H1 (cell line): ENCODE measurements at regions of chr12 and their contacts with region 1.

Region 1: DNA sequence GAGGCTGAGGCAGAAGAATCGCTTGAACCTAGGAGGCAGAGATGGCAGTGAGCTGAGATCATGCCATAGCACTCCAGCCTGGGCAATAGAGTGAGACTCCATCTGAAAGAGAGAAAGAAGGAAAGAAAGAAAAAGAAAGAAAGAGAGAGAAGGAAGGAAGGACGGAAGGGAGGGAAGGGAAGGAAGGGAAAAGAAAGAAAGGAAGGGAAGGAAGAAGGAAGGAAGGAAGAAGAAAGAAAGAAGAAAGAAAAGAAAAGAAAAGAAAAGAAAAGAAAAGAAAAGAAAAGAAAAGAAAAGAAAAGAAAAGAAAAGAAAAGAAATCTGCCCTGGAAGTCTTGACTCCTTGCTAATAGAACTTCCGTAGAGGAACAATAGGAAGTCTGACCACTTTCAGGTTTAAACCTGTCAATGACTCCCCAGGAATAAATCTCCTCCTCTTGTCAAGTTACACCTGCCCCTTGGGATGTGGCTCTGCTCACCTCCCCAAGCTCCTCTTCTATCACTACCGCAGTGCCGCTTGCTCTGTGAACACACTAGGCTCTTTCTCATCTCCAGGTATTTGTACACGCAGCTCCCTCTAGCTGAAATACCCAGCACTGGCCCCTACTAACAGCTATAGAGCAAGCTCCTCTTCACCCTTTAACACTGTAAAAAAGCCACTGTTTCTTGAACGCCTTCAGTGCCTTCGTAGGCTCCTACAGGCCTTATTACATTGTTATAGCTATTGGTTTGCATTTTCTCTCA is 773.1 kb upstream of the TBX3 start:
- DNase-seq: no peak
- H3K4me3 ChIP-seq: no peak overlapping the region
- H3K27ac ChIP-seq: no peak overlapping the region
- H3K4me1 ChIP-seq: peaks cover 3 to 9% (median 7%) of the 10 kb centered on the region in 4 experiments
- H3K27me3 ChIP-seq: peaks cover 0 to 5% (median under 1%) of the 10 kb centered on the region in 4 experiments; a peak in 3 of 7 replicates
- CTCF ChIP-seq: peak in 2 of 3 experiments; percentile 54 to 75; a peak in 3 of 4 replicates
- EP300 ChIP-seq: no peak
- POLR2A ChIP-seq: no peak
- RAD21 ChIP-seq: peak; percentile 71 to 80

Region 2: GRCh38 chr12:115468087-115468510 is 11.0 kb after region 1 on chr12:
- CTCF ChIA-PET with region 1: interaction called, 33 read pairs
- POLR2A ChIA-PET with region 1: no interaction called
- DNase-seq: no peak
- H3K4me3 ChIP-seq: no peak overlapping the region
- H3K27ac ChIP-seq: no peak overlapping the region
- H3K4me1 ChIP-seq: peaks cover 0 to 3% (median 0%) of the 10 kb centered on the region in 4 experiments; a peak in 3 of 7 replicates
- H3K27me3 ChIP-seq: no peaks in the 10 kb centered on the region
- CTCF ChIP-seq: peak; percentile 18 to 27 (median 27); a peak in 2 of 4 replicates
- EP300 ChIP-seq: no peak
- POLR2A ChIP-seq: no peak
- RAD21 ChIP-seq: peak; percentile 36 to 51; a peak in 3 of 4 replicates

Region 3: DNA sequence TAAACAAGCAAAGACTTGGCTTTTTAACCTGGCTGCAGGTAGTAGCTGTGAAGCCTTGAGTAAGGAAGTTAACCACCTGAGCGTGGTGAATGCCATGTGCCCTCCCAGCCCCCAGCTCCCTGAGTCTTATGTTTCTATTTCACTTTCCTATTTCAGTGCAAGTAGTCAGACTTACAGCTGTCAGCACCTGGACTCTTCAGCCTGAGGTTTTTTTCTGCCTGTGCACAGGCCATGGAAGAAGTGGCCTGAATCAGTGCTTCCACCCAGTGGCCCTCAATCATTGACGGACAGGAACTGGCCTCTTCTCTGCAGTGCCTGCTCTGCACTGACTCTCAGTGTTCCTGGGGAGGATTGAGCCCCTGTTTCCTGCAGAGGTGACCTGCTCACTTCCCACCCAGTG is 24.0 kb after region 1 on chr12:
- CTCF ChIA-PET with region 1: interaction called, 11 read pairs
- POLR2A ChIA-PET with region 1: no interaction called
- DNase-seq: no peak
- H3K4me3 ChIP-seq: no peak overlapping the region
- H3K27ac ChIP-seq: no peak overlapping the region
- H3K4me1 ChIP-seq: no peaks in the 10 kb centered on the region
- H3K27me3 ChIP-seq: no peaks in the 10 kb centered on the region
- CTCF ChIP-seq: no peak
- EP300 ChIP-seq: no peak
- POLR2A ChIP-seq: no peak
- RAD21 ChIP-seq: no peak